ENCODE measurements at regions of chr1 and their contacts with region 1.

Region 1: GRCh38 chr1:112803906-112804762 is 89.0 kb upstream of the PPM1J start:
- DNase-seq: peak; percentile 45 to 62
- ATAC-seq: peak; percentile 58 to 92 (median 89)
- H3K4me3 ChIP-seq: no peak overlapping the region
- H3K4me3 Mint-ChIP-seq: no peak overlapping the region
- H3K27ac ChIP-seq: no peak overlapping the region
- H3K27ac Mint-ChIP-seq: no peak overlapping the region
- H3K4me1 ChIP-seq: no peaks in the 10 kb centered on the region
- H3K4me1 Mint-ChIP-seq: peaks cover 0 to 3% of the 10 kb centered on the region in 2 donors
- H3K27me3 ChIP-seq: peaks cover 2% of the 10 kb centered on the region
- H3K27me3 Mint-ChIP-seq: peaks cover 0 to 13% of the 10 kb centered on the region in 2 donors
- CTCF ChIP-seq: peak; percentile 58

Region 2: DNA sequence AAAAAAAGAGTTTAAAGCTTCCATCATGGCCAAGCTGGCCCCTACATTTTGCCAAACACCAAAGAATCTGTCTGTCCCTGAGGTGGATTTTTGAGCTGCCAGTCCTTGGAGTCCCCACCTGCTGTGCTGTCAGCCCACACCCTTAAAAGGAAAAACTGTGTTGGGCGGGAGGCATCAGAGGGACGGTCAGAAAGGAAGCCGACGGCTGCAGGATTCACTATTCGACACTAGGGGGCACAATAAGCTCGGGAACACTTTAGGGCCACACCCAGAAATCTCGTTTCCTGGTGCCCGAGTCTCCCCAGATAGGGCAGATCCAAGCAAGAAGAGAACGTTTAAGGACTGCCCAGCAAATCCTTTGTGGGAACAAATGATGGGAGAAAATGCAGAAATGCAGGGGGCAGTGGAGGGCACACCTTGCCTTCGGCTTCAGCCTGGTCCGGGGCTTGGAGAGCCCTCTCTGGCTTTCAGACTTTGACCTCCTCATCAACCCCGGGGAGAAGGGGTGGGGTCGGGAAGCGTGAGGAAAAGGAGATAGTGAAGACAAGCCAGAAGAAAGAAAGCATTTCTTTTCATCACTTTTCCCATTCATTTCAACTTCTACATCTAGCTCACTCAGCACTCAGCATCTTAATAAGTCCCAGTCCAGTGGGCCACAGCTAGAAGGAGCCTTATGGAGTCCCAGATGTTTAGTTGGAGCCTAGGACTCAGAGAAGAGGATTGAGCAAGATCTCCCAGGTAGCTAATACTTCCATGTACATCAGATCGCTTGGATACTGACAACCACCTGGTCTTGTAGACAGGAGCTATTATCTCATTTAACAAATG is 413.1 kb before region 1 on chr1:
- intact Hi-C with region 1: loop called (anchors 10 kb)
- DNase-seq: peak; percentile 61 to 91
- ATAC-seq: peak; percentile 88 to 94 (median 93)
- H3K4me3 ChIP-seq: no peak overlapping the region
- H3K4me3 Mint-ChIP-seq: peak overlapping the region; percentile 37
- H3K27ac ChIP-seq: no peak overlapping the region
- H3K27ac Mint-ChIP-seq: no peak overlapping the region
- H3K4me1 ChIP-seq: peaks cover 18% of the 10 kb centered on the region
- H3K4me1 Mint-ChIP-seq: peaks cover 15 to 17% of the 10 kb centered on the region in 2 donors
- H3K27me3 ChIP-seq: peaks cover 2% of the 10 kb centered on the region
- H3K27me3 Mint-ChIP-seq: peaks cover 37 to 49% of the 10 kb centered on the region in 2 donors
- CTCF ChIP-seq: peak; percentile 81

Region 3: GRCh38 chr1:112501810-112502641 is 302.1 kb before region 1 on chr1:
- intact Hi-C with region 1: loop called (anchors 10 kb)
- DNase-seq: peak; percentile 47 to 72
- ATAC-seq: peak; percentile 57 to 85 (median 76)
- H3K4me3 ChIP-seq: peak overlapping the region; percentile 12
- H3K4me3 Mint-ChIP-seq: peak overlapping the region; percentile 65
- H3K27ac ChIP-seq: no peak overlapping the region
- H3K27ac Mint-ChIP-seq: no peak overlapping the region
- H3K4me1 ChIP-seq: peaks cover 8% of the 10 kb centered on the region
- H3K4me1 Mint-ChIP-seq: no peaks in the 10 kb centered on the region
- H3K27me3 ChIP-seq: peaks cover 29% of the 10 kb centered on the region
- H3K27me3 Mint-ChIP-seq: peaks cover 56 to 61% of the 10 kb centered on the region in 2 donors
- CTCF ChIP-seq: peak; percentile 53